Heart right ventricle (tissue), 16 donors: ENCODE measurements at regions of chr18 and their contacts with region 1.

Region 1: DNA sequence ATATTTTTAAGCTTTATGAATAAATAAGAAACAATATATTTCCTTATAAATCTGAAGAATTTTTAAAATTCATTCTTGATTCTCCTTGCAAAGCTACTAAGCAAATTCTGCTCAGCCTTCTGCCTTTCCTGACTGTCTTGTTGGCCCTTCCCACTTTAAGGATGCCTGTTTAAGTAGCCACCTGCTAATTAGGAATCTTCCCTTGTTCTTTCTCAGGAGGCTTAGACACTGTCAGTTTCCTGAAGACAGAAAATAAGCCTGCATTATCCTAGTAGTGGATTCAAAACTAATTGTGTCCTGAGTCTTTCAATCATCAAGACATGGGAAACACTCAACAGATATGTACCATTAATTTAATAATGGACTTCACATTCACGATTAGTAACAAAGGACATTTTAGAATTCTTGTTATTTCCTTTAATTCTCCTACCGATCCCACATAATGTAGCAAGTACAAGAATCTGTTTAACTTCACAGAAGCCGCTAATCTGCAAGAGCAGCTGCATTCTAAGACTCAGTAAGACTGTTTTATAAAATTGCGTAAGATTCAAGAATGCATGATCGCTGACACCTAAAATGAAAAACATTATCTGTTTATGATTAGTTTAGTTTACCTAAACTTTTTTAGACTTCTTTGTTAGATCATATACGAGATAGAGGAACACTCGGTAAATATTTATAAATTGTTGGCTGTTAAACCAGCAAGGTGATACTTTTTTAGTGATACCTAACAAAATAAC is 445.4 kb upstream of the DSEL start:
- DNase-seq: no peak
- ATAC-seq: no peak
- H3K4me3 ChIP-seq: no peak overlapping the region
- H3K27ac ChIP-seq: no peak overlapping the region
- H3K4me1 ChIP-seq: no peaks in the 10 kb centered on the region
- H3K27me3 ChIP-seq: no peaks in the 10 kb centered on the region
- CTCF ChIP-seq: no peak

Region 2: DNA sequence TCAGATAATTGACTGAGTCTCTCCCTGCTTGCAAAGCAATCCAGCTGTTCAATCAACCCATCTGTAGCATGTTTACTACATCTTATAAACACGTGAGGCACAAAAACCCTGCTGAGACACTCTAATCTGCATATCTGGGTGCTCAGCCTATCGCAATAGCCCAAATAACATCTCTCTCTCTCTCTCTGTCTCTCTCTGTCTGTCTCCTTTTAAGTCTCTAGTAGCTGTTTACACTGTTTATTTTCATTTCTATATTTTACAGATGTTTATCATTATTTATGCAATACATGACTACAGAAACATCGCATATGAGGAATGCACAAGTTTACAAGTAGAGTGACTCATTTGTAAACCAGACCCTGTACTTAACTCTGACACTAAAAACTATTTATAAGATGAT is 23.2 kb before region 1 on chr18:
- intact Hi-C with region 1: loop called in 1 of 10 experiments (anchors 2 kb)
- DNase-seq: no peak
- ATAC-seq: no peak
- H3K4me3 ChIP-seq: no peak overlapping the region
- H3K27ac ChIP-seq: no peak overlapping the region
- H3K4me1 ChIP-seq: no peaks in the 10 kb centered on the region
- H3K27me3 ChIP-seq: no peaks in the 10 kb centered on the region
- CTCF ChIP-seq: no peak